ENCODE measurements at regions of chr2 and their contacts with region 1.

Region 1: GRCh38 chr2:201231781-201232466 is 28.4 kb upstream of the CASP8 start:
- DNase-seq: peak; percentile 77
- H3K4me3 ChIP-seq: peak overlapping the region; percentile 36
- H3K27ac ChIP-seq: peak overlapping the region; percentile 62
- H3K4me1 ChIP-seq: peaks cover 41% of the 10 kb centered on the region
- H3K27me3 ChIP-seq: no peaks in the 10 kb centered on the region
- CTCF ChIP-seq: peak; percentile 90

Region 2: GRCh38 chr2:201185863-201186262 is 46.1 kb before region 1 on chr2:
- intact Hi-C with region 1: loop called (anchors 5 kb)
- DNase-seq: no peak
- H3K4me3 ChIP-seq: peak overlapping the region; percentile 63
- H3K27ac ChIP-seq: peak overlapping the region; percentile 73
- H3K4me1 ChIP-seq: peaks cover 37% of the 10 kb centered on the region
- H3K27me3 ChIP-seq: no peaks in the 10 kb centered on the region
- CTCF ChIP-seq: no peak

Region 3: GRCh38 chr2:201363857-201364560 is 132.1 kb after region 1 on chr2:
- intact Hi-C with region 1: loop called (anchors 2 kb)
- DNase-seq: no peak
- H3K4me3 ChIP-seq: no peak overlapping the region
- H3K27ac ChIP-seq: no peak overlapping the region
- H3K4me1 ChIP-seq: peaks cover 22% of the 10 kb centered on the region
- H3K27me3 ChIP-seq: no peaks in the 10 kb centered on the region
- CTCF ChIP-seq: peak; percentile 87